ENCODE measurements at regions of chrX and their contacts with region 1.

Region 1: GRCh38 chrX:40013266-40014195 is 84.2 kb downstream of the BCOR start:
- DNase-seq: peak in 1 of 2 donors; percentile 79
- H3K4me3 ChIP-seq: peak overlapping the region; percentile 55 to 67
- H3K27ac ChIP-seq: peak overlapping the region; percentile 92 to 97
- H3K4me1 ChIP-seq: peaks cover 0 to 9% of the 10 kb centered on the region in 2 donors
- H3K27me3 ChIP-seq: peaks cover 10% of the 10 kb centered on the region
- CTCF ChIP-seq: no peak

Region 2: DNA sequence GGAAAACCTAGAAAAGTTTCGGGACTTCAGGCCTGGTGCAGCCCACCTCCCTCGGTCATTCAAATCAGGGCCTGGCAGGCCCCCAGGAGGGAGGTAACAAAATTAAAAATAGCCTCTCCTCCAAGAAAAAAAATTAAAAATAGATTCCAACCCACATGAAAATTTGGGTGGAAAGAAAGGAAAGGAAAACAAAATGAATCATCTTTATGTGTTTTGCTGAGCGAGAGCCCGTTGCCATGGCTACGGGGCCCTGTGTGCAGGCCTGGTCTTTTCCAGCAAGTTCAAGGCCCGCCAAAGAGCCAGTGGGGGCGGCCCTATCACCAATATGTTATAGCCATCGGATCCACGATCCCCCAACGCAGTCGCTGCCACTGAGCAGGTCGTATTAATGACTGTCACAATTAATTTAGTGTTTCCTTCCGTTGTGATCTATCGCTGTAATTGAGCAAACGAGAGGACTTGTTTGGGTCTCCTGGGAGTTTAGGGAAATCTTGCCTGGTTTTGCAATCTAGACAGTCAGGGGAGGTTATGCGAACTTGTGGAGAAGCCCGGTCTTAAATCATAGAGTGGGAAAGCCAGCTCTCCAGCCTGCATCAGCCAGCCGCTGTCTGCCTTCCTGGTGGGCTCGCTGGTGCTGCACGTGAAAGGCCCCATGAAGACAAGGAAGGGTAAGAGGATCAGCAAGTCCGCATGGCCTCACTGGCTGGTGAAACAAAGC is 368.2 kb before region 1 on chrX:
- intact Hi-C with region 1: loop called (anchors 2 kb)
- DNase-seq: peak; percentile 47 to 89
- H3K4me3 ChIP-seq: no peak overlapping the region
- H3K27ac ChIP-seq: peak overlapping the region; percentile 32 to 62
- H3K4me1 ChIP-seq: peaks cover 0 to 8% of the 10 kb centered on the region in 2 donors
- H3K27me3 ChIP-seq: no peaks in the 10 kb centered on the region
- CTCF ChIP-seq: no peak

Region 3: GRCh38 chrX:39814391-39814790 is 199.1 kb before region 1 on chrX:
- intact Hi-C with region 1: loop called (anchors 5 kb)
- DNase-seq: no peak
- H3K4me3 ChIP-seq: no peak overlapping the region
- H3K27ac ChIP-seq: peak overlapping the region; percentile 46 to 63
- H3K4me1 ChIP-seq: peaks cover 0 to 22% of the 10 kb centered on the region in 2 donors
- H3K27me3 ChIP-seq: no peaks in the 10 kb centered on the region
- CTCF ChIP-seq: peak; percentile 19 to 41 (median 28)

Region 4: GRCh38 chrX:40153335-40154249 is 140.1 kb after region 1 on chrX:
- intact Hi-C with region 1: loop called (anchors 5 kb)
- DNase-seq: no peak
- H3K4me3 ChIP-seq: peak overlapping the region; percentile 56 to 62
- H3K27ac ChIP-seq: peak overlapping the region; percentile 63 to 67
- H3K4me1 ChIP-seq: peaks cover 9 to 10% of the 10 kb centered on the region in 2 donors
- H3K27me3 ChIP-seq: peaks cover 8% of the 10 kb centered on the region
- CTCF ChIP-seq: no peak